AG04449 (cell line): ENCODE measurements at regions of chr5 and their contacts with region 1.

Region 1: DNA sequence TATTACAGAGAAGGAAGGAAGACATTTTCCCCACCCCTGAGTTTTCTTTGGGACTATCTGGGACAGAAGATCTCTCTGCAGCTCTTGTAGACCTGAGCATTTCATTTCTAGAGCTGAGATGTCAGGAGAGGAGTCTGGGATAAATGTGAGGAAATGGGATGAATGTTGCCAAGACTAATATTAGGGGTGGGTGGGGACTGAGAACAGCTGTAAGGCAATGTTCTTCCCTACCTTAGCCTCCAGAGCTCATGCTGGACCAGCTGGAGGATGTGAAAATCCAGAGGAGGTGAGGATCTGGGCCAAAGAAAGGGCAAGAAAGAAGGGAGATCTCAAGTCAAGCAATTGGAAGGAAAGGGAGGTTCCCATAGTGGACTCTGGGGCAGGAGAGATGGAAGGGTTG is 23.1 kb upstream of the FOXD1 start:
- DNase-seq: no peak
- H3K4me3 ChIP-seq: no peak overlapping the region
- CTCF ChIP-seq: no peak

Region 2: GRCh38 chr5:73454351-73455036 is 17.2 kb before region 1 on chr5:
- CTCF ChIA-PET with region 1: interaction called, 12 read pairs
- POLR2A ChIA-PET with region 1: no interaction called
- DNase-seq: no peak
- H3K4me3 ChIP-seq: no peak overlapping the region
- CTCF ChIP-seq: peak; percentile 77